CD8-positive, alpha-beta T cell (primary cell): ENCODE measurements at regions of chr1 and their contacts with region 1.

Region 1: DNA sequence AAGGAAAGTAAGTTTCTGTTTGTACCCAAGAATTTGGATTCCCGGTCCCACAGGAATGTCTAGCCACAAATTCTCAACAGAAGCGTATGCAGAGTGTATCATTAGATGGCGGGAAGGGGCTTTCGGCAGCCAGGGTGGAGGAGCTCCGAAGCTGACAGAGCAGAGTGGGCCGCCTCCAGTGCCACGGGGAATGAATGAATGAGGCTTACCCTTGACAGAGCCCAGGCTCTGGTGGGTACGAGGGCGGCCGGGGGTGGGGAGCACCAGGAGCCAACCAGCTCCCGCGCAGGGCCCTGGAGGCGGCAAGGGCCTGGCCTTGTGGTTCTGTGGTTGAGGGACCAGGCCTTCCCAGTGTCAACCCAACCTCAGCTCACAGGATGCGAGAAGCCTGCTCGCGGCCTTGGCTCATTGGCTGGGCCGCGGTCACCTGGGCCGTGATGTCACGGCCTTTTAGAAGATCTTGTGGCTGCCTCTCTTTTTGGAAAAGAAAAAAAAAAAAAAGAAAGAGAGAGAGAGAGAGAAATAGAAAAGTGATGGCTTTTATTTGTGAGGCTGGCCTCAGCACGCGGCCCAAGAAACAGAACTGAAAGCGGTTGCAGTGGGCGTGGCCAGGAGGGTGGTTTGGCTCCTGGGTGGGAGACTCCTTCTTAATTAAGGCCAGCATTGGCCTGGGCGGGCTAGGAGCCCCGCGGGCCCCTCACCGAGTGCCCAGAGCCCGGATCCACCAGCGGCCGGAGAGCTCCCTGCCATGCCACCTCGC is 34.9 kb upstream of the RUNX3 start:
- DNase-seq: peak; percentile 77 to 98 (median 87)
- ATAC-seq: peak; percentile 78
- H3K4me3 ChIP-seq: peak overlapping the region; percentile 60 to 64
- H3K4me3 Mint-ChIP-seq: peak overlapping the region; percentile 90
- H3K27ac ChIP-seq: peak overlapping the region; percentile 67 to 79
- H3K27ac Mint-ChIP-seq: peak overlapping the region; percentile 99
- H3K4me1 ChIP-seq: peaks cover 84% of the 10 kb centered on the region
- H3K4me1 Mint-ChIP-seq: peaks cover 78% of the 10 kb centered on the region
- H3K27me3 ChIP-seq: no peaks in the 10 kb centered on the region
- H3K27me3 Mint-ChIP-seq: no peaks in the 10 kb centered on the region
- CTCF ChIP-seq: no peak

Region 2: GRCh38 chr1:24909388-24909898 is 55.5 kb before region 1 on chr1:
- CTCF ChIA-PET with region 1: interaction called, 5 read pairs
- POLR2A ChIA-PET with region 1: interaction called, 5 read pairs
- intact Hi-C with region 1: loop called in 1 of 2 experiments (anchors 5 kb)
- DNase-seq: peak in 3 of 9 experiments; percentile 13 to 41 (median 28)
- ATAC-seq: no peak
- H3K4me3 ChIP-seq: no peak overlapping the region
- H3K4me3 Mint-ChIP-seq: peak overlapping the region; percentile 5
- H3K27ac ChIP-seq: peak overlapping the region; percentile 24 to 96
- H3K27ac Mint-ChIP-seq: peak overlapping the region; percentile 100
- H3K4me1 ChIP-seq: peaks cover 87% of the 10 kb centered on the region
- H3K4me1 Mint-ChIP-seq: peaks cover 68% of the 10 kb centered on the region
- H3K27me3 ChIP-seq: no peaks in the 10 kb centered on the region
- H3K27me3 Mint-ChIP-seq: no peaks in the 10 kb centered on the region
- CTCF ChIP-seq: no peak

Region 3: GRCh38 chr1:24978383-24979032 is 13.5 kb after region 1 on chr1:
- CTCF ChIA-PET with region 1: interaction called, 11 read pairs
- POLR2A ChIA-PET with region 1: interaction called, 5 read pairs
- intact Hi-C with region 1: loop called in 1 of 2 experiments (anchors 2 kb)
- DNase-seq: no peak
- ATAC-seq: no peak
- H3K4me3 ChIP-seq: no peak overlapping the region
- H3K4me3 Mint-ChIP-seq: no peak overlapping the region
- H3K27ac ChIP-seq: no peak overlapping the region
- H3K27ac Mint-ChIP-seq: peak overlapping the region; percentile 55
- H3K4me1 ChIP-seq: peaks cover 64% of the 10 kb centered on the region
- H3K4me1 Mint-ChIP-seq: peaks cover 62% of the 10 kb centered on the region
- H3K27me3 ChIP-seq: peaks cover 0 to 2% of the 10 kb centered on the region in 2 experiments
- H3K27me3 Mint-ChIP-seq: no peaks in the 10 kb centered on the region
- CTCF ChIP-seq: no peak

Region 4: DNA sequence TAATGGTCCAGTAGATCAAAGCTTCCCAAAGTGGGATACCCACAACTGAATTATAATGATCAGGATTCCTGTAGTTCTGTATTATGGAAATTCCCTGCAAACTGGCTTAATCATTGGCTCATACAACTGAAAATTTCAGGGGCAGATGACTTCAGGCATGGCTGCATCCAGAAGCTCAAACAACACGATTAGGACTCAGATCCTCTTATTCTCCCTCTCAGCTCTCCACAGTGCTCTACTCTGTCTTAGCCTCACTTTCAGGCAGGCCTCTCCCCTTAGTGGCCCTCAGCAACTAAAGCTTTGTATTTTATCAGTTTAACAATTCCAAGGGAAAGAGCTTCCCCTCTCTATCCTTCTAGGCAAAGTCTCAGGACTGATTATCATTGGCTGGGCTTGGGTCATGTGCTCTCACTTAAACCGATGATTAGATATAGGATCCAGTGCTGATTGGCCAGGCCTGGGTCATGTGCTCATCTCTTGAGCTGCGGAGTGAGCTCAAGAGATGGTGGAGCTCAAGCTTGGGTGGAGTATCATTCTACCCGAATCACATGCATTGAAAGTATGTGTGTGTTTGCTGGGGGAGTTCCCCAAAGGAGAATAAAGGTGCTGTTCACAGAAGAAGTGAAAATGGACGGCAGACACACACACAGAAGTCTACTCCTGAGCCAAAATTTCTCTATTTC is 23.0 kb after region 1 on chr1:
- CTCF ChIA-PET with region 1: interaction called, 16 read pairs
- POLR2A ChIA-PET with region 1: interaction called, 17 read pairs
- intact Hi-C with region 1: loop called in 1 of 2 experiments (anchors 2 kb)
- DNase-seq: peak in 2 of 9 experiments; percentile 33 to 71
- ATAC-seq: peak; percentile 45
- H3K4me3 ChIP-seq: no peak overlapping the region
- H3K4me3 Mint-ChIP-seq: peak overlapping the region; percentile 53
- H3K27ac ChIP-seq: no peak overlapping the region
- H3K27ac Mint-ChIP-seq: peak overlapping the region; percentile 83
- H3K4me1 ChIP-seq: peaks cover 100% of the 10 kb centered on the region
- H3K4me1 Mint-ChIP-seq: peaks cover 97% of the 10 kb centered on the region
- H3K27me3 ChIP-seq: no peaks in the 10 kb centered on the region
- H3K27me3 Mint-ChIP-seq: no peaks in the 10 kb centered on the region
- CTCF ChIP-seq: no peak

Region 5: GRCh38 chr1:24996983-24997893 is 32.2 kb after region 1 on chr1:
- CTCF ChIA-PET with region 1: interaction called, 16 read pairs
- POLR2A ChIA-PET with region 1: interaction called, 14 read pairs
- intact Hi-C with region 1: loop called in 1 of 2 experiments (anchors 2 kb)
- DNase-seq: peak in 8 of 9 experiments; percentile 34 to 86 (median 74)
- ATAC-seq: peak; percentile 65
- H3K4me3 ChIP-seq: peak overlapping the region in 1 of 2 experiments; percentile 1
- H3K4me3 Mint-ChIP-seq: peak overlapping the region; percentile 54
- H3K27ac ChIP-seq: peak overlapping the region; percentile 14 to 73
- H3K27ac Mint-ChIP-seq: peak overlapping the region; percentile 92
- H3K4me1 ChIP-seq: peaks cover 89% of the 10 kb centered on the region
- H3K4me1 Mint-ChIP-seq: peaks cover 92% of the 10 kb centered on the region
- H3K27me3 ChIP-seq: no peaks in the 10 kb centered on the region
- H3K27me3 Mint-ChIP-seq: no peaks in the 10 kb centered on the region
- CTCF ChIP-seq: no peak

Region 6: GRCh38 chr1:25022361-25023189 is 57.6 kb after region 1 on chr1:
- CTCF ChIA-PET with region 1: interaction called, 27 read pairs
- POLR2A ChIA-PET with region 1: interaction called, 55 read pairs
- intact Hi-C with region 1: loop called (anchors 1 kb)
- DNase-seq: peak; percentile 91 to 100 (median 95)
- ATAC-seq: peak; percentile 83
- H3K4me3 ChIP-seq: peak overlapping the region; percentile 43 to 45
- H3K4me3 Mint-ChIP-seq: peak overlapping the region; percentile 58
- H3K27ac ChIP-seq: peak overlapping the region; percentile 83 to 100
- H3K27ac Mint-ChIP-seq: peak overlapping the region; percentile 93
- H3K4me1 ChIP-seq: peaks cover 90% of the 10 kb centered on the region
- H3K4me1 Mint-ChIP-seq: peaks cover 88% of the 10 kb centered on the region
- H3K27me3 ChIP-seq: no peaks in the 10 kb centered on the region
- H3K27me3 Mint-ChIP-seq: no peaks in the 10 kb centered on the region
- CTCF ChIP-seq: no peak

Region 7: DNA sequence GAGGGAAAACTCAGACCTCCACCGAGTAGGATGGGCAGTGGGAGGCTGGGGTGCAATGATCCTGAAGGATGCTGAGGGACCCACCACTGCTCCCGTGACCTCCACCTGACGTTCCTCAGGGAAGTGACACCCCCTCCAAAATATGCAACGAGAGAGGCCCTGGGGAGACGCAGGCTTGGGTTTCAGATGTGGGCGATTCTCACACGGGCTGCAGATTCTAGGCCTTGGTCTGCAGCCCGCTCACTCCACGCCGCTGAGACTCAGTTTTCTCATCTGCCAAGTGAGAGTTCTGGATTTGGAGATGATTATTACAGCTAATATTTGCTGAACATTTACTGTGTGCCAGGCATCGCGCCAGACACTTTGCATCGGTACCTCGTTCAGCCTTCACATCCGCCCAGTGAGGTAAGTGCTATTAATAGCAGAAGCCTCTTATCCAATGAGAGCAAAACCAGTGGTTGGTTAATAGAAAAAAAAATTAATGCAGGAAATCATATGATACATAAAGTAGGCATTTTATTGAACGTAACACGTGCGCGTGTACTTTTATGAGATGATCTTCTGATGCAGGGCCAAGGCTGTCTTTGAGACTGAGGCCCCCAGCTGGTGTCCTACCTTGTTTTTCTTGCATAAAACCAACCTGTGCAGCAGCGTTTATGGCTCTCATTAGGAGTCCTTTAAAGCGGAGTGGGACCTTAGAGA is 67.1 kb after region 1 on chr1:
- CTCF ChIA-PET with region 1: interaction called, 163 read pairs
- POLR2A ChIA-PET with region 1: interaction called, 55 read pairs
- intact Hi-C with region 1: loop called (anchors 1 kb)
- DNase-seq: peak in 8 of 9 experiments; percentile 36 to 94 (median 66)
- ATAC-seq: peak; percentile 60
- H3K4me3 ChIP-seq: no peak overlapping the region
- H3K4me3 Mint-ChIP-seq: peak overlapping the region; percentile 50
- H3K27ac ChIP-seq: peak overlapping the region; percentile 32 to 95
- H3K27ac Mint-ChIP-seq: peak overlapping the region; percentile 97
- H3K4me1 ChIP-seq: peaks cover 99% of the 10 kb centered on the region
- H3K4me1 Mint-ChIP-seq: peaks cover 77% of the 10 kb centered on the region
- H3K27me3 ChIP-seq: no peaks in the 10 kb centered on the region
- H3K27me3 Mint-ChIP-seq: no peaks in the 10 kb centered on the region
- CTCF ChIP-seq: peak; percentile 42

Region 8: GRCh38 chr1:25123551-25123950 is 158.6 kb after region 1 on chr1:
- CTCF ChIA-PET with region 1: no interaction called
- POLR2A ChIA-PET with region 1: no interaction called
- intact Hi-C with region 1: no loop called
- DNase-seq: no peak
- ATAC-seq: no peak
- H3K4me3 ChIP-seq: no peak overlapping the region
- H3K4me3 Mint-ChIP-seq: no peak overlapping the region
- H3K27ac ChIP-seq: no peak overlapping the region
- H3K27ac Mint-ChIP-seq: no peak overlapping the region
- H3K4me1 ChIP-seq: peaks cover 11% of the 10 kb centered on the region
- H3K4me1 Mint-ChIP-seq: peaks cover 15% of the 10 kb centered on the region
- H3K27me3 ChIP-seq: no peaks in the 10 kb centered on the region
- H3K27me3 Mint-ChIP-seq: no peaks in the 10 kb centered on the region
- CTCF ChIP-seq: no peak